HCT116 (cell line): ENCODE measurements at regions of chr13 and their contacts with region 1.

Region 1: GRCh38 chr13:98842864-98843481 is 90.5 kb upstream of the SLC15A1 start:
- DNase-seq: peak; percentile 57
- ATAC-seq: peak; percentile 84
- H3K4me3 ChIP-seq: no peak overlapping the region
- H3K27ac ChIP-seq: no peak overlapping the region
- H3K4me1 ChIP-seq: peaks cover 0 to 4% of the 10 kb centered on the region in 2 experiments; a peak in 1 of 4 replicates
- H3K27me3 ChIP-seq: no peaks in the 10 kb centered on the region
- CTCF ChIP-seq: peak; percentile 70 to 95 (median 91)
- POLR2A ChIP-seq: no peak
- RAD21 ChIP-seq: peak; percentile 86

Region 2: DNA sequence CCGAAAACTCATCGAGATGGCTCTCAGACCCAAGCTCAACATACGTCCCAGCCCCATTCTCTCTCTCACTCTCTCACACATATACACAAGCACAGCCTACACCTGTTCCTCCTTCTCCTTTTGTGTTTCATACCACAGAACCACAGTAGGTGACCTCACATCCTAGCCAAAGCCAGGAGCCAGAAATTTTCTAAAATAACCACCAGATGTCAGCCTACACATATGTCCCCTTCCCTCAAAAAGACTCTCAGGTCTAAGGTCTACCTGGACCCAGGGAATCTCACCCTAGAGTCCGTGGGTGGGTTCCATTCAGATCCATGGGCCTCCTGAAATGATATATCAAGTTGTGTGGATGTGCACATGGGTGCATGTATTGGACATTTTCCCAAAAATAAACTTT is 993.7 kb before region 1 on chr13:
- CTCF ChIA-PET with region 1: no interaction called
- POLR2A ChIA-PET with region 1: no interaction called
- RAD21 ChIA-PET with region 1: no interaction called
- intact Hi-C with region 1: loop called (anchors 2 kb)
- DNase-seq: peak; percentile 34
- ATAC-seq: peak; percentile 88
- H3K4me3 ChIP-seq: no peak overlapping the region
- H3K27ac ChIP-seq: no peak overlapping the region
- H3K4me1 ChIP-seq: no peaks in the 10 kb centered on the region
- H3K27me3 ChIP-seq: no peaks in the 10 kb centered on the region
- CTCF ChIP-seq: peak; percentile 45 to 54 (median 53); a peak in 5 of 6 replicates
- POLR2A ChIP-seq: no peak
- RAD21 ChIP-seq: peak; percentile 74

Region 3: GRCh38 chr13:98044301-98044700 is 798.7 kb before region 1 on chr13:
- CTCF ChIA-PET with region 1: no interaction called
- POLR2A ChIA-PET with region 1: no interaction called
- RAD21 ChIA-PET with region 1: no interaction called
- intact Hi-C with region 1: loop called (anchors 5 kb)
- DNase-seq: no peak
- ATAC-seq: no peak; the same call in 1 of the 2 replicates
- H3K4me3 ChIP-seq: no peak overlapping the region
- H3K27ac ChIP-seq: no peak overlapping the region
- H3K4me1 ChIP-seq: no peaks in the 10 kb centered on the region; a peak in 1 of 4 replicates
- H3K27me3 ChIP-seq: no peaks in the 10 kb centered on the region
- CTCF ChIP-seq: no peak
- POLR2A ChIP-seq: no peak
- RAD21 ChIP-seq: no peak

Region 4: DNA sequence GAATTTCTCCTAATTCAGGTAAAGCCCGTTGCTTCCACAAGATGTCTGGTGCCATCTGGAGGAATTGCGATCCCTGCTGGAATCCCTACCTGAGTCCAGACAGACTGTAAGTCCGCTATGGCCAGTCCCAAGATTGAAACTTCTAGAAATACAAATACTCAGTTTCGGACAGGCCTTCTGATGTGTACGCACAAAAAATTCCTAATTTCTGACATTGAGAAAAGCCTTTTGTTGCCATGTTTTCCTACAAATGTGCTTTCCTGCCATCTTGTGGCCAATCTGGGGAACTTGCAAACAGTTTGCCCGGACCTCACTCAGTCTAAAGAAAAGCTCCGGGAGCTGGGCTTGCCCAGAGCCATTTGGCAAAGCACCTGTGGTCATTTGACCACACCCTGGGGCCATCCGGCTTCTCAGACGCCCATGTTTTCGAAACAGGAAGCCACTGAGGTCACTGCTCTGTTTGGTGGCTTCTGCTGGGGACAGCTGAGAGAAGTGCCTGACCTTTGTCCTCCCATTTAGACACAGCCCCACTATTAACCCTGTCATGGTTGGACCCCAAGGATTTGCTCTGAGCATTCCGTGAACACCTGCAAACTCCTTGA is 169.9 kb before region 1 on chr13:
- CTCF ChIA-PET with region 1: interaction called, 3 read pairs
- POLR2A ChIA-PET with region 1: no interaction called
- RAD21 ChIA-PET with region 1: no interaction called
- intact Hi-C with region 1: loop called (anchors 2 kb)
- DNase-seq: peak; percentile 71
- ATAC-seq: peak; percentile 94
- H3K4me3 ChIP-seq: no peak overlapping the region; a peak in 1 of 4 replicates
- H3K27ac ChIP-seq: no peak overlapping the region
- H3K4me1 ChIP-seq: peaks cover 0 to 11% of the 10 kb centered on the region in 2 experiments; a peak in 2 of 4 replicates
- H3K27me3 ChIP-seq: no peaks in the 10 kb centered on the region
- CTCF ChIP-seq: peak; percentile 80 to 99 (median 97)
- POLR2A ChIP-seq: no peak
- RAD21 ChIP-seq: peak; percentile 92

Region 5: DNA sequence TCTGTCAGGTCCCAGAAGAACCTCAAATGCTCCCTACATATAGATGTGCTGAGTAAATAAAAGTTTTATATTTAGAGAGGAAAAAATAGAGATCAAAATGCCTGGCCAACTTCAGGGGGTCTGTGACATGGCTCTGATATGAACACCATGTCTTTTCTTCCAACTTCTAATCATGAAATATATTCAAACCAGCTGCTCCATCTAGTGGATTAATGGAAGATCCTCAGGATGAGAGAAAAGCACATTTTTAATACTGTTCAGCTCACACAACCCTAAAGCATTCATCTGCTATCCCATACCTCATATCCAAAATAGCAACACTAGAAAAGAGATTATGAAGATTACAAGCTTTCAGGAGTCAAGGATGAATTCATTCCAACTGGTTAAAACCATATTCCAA is 190.8 kb after region 1 on chr13:
- CTCF ChIA-PET with region 1: interaction called, 6 read pairs
- POLR2A ChIA-PET with region 1: no interaction called
- RAD21 ChIA-PET with region 1: interaction called in 1 of 2 experiments, 3 read pairs
- intact Hi-C with region 1: loop called (anchors 1 kb)
- DNase-seq: no peak
- ATAC-seq: peak; percentile 71
- H3K4me3 ChIP-seq: no peak overlapping the region
- H3K27ac ChIP-seq: no peak overlapping the region
- H3K4me1 ChIP-seq: peaks cover 3 to 22% of the 10 kb centered on the region in 2 experiments
- H3K27me3 ChIP-seq: no peaks in the 10 kb centered on the region
- CTCF ChIP-seq: peak; percentile 49 to 66 (median 49); a peak in 5 of 6 replicates
- POLR2A ChIP-seq: no peak
- RAD21 ChIP-seq: peak; percentile 66